HepG2 (cell line): ENCODE measurements at regions of chr12 and their contacts with region 1.

Region 1: DNA sequence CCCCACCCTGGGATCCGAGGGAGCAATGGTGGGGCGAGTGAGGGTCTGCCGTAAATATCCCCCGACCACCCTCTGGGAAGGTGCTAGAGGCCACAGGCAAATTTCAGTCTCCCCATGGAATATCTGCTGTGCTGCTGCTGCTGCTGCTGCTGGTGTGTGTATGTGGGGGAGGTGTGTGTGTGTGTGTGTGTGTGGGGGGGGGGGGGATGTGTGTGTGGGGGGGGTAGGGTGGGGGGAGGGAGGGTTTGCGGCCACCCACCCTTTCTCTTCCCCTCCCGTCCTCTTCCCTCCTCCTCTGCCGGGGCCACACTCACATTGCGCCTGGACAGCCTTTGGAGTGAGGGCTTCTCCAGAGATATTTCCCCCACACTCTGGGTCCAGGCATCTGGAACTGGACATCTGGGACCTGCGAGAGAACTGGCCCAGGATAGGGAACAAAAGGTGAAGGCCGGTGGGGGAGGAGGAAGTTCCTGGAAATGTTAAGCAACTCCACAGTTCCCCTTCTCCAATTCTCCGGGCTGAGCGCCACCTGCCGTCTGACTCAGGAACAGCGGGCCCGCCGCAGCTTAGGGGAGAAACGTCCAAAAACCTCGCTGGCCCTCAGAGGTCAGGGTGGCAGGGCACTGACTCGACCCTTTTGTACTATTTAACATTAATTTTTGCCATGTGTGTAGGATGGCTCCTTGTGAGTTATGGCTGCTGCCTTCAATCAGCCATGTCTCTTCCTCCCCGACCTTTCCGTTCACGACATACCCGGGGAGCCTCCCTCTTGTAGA is at the start of gene C1RL:
- DNase-seq: peak; percentile 89
- ATAC-seq: peak; percentile 66
- H3K4me3 ChIP-seq: peak within 1 kb of the TSS; percentile 72 to 91 (median 74)
- H3K27ac ChIP-seq: peak within 1 kb of the TSS; percentile 99
- H3K4me1 ChIP-seq: peaks cover 25% of the 10 kb centered on the region
- H3K27me3 ChIP-seq: no peaks in the 10 kb centered on the region; a peak in 1 of 5 replicates
- CTCF ChIP-seq: peak; percentile 95
- EP300 ChIP-seq: peak; percentile 45 to 70; a peak in 3 of 4 replicates
- POLR2A ChIP-seq: peak in 1 of 2 experiments; percentile 58; a peak in 2 of 4 replicates
- RAD21 ChIP-seq: peak; percentile 90
- total RNA-seq, gene C1RL: 14.2 and 28.9 TPM in 2 replicates

Region 2: GRCh38 chr12:6927379-6928024 is 181.5 kb before region 1 on chr12 and contains the start of gene ATN1:
- CTCF ChIA-PET with region 1: no interaction called
- POLR2A ChIA-PET with region 1: interaction called, 9 read pairs
- in situ Hi-C with region 1: no loop called
- intact Hi-C with region 1: loop called (anchors 5 kb)
- DNase-seq: no peak
- ATAC-seq: peak; percentile 18
- H3K4me3 ChIP-seq: peak within 1 kb of the TSS; percentile 82 to 93 (median 90)
- H3K27ac ChIP-seq: peak within 1 kb of the TSS; percentile 64
- H3K4me1 ChIP-seq: peaks cover 66% of the 10 kb centered on the region
- H3K27me3 ChIP-seq: no peaks in the 10 kb centered on the region; a peak in 1 of 5 replicates
- CTCF ChIP-seq: no peak
- EP300 ChIP-seq: no peak
- POLR2A ChIP-seq: peak in 1 of 2 experiments; percentile 53; a peak in 1 of 4 replicates
- RAD21 ChIP-seq: no peak
- total RNA-seq, gene ATN1: 2.1 TPM in 2 replicates

Region 3: GRCh38 chr12:7018350-7019042 is 90.5 kb before region 1 on chr12 and contains the start of gene LPCAT3:
- CTCF ChIA-PET with region 1: no interaction called
- POLR2A ChIA-PET with region 1: interaction called, 17 read pairs
- in situ Hi-C with region 1: no loop called
- intact Hi-C with region 1: no loop called
- DNase-seq: peak; percentile 92
- ATAC-seq: peak; percentile 96
- H3K4me3 ChIP-seq: peak within 1 kb of the TSS; percentile 60 to 97 (median 85)
- H3K27ac ChIP-seq: peak within 1 kb of the TSS; percentile 97
- H3K4me1 ChIP-seq: peaks cover 35% of the 10 kb centered on the region
- H3K27me3 ChIP-seq: no peaks in the 10 kb centered on the region; a peak in 1 of 5 replicates
- CTCF ChIP-seq: peak; percentile 87
- EP300 ChIP-seq: peak in 1 of 2 experiments; percentile 34; a peak in 1 of 4 replicates
- POLR2A ChIP-seq: peak; percentile 71 to 78
- RAD21 ChIP-seq: peak; percentile 92
- total RNA-seq, gene LPCAT3: 22.1 and 44.5 TPM in 2 replicates

Region 4: DNA sequence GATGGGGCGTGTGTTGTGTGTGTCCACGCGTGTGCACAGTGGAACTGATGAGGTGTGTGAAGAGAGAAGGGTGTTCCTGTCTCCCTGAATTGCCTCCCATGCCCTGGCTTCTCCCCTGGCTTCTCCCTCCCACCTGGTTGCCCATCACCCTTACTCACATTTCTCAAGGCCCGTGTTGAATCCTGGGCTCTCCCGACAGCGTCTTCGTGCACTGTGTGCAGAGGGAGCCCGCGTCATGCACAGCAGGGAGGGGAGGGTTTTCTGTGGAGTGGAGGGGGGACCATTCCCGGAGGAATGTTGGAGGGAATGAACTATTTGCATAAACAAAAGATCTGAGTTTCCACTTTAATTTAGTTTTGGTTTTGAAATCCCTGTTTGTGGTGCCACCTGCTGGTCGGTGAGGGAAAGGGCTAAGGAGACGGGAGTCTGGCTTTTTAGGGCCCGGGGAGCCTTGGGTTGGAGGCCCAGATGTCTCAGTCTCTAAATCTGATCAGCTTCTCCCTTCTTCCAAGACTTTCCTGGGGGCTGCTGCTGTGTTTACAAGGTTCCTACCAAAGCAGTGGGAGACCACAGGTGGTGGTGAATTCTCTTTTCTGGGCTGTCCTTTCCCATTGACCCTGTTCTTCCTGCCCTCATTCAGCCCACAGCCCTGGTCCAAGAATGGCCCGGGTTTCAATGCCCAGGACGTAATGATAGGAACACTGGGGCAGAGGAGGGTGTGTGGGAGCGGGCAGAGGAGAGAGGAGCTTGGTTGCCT is 16.6 kb before region 1 on chr12 and contains the start of gene C1R:
- CTCF ChIA-PET with region 1: interaction called, 7 read pairs
- POLR2A ChIA-PET with region 1: interaction called, 34 read pairs
- in situ Hi-C with region 1: no loop called
- intact Hi-C with region 1: loop called (anchors 2 kb)
- DNase-seq: peak; percentile 48
- ATAC-seq: peak; percentile 52
- H3K4me3 ChIP-seq: peak within 1 kb of the TSS; percentile 53 to 68 (median 53); a peak in 5 of 6 replicates
- H3K27ac ChIP-seq: no peak within 1 kb of the TSS
- H3K4me1 ChIP-seq: peaks cover 27% of the 10 kb centered on the region
- H3K27me3 ChIP-seq: peaks cover 0 to 2% of the 10 kb centered on the region in 2 experiments; a peak in 1 of 5 replicates
- CTCF ChIP-seq: peak; percentile 86
- EP300 ChIP-seq: no peak
- POLR2A ChIP-seq: no peak; a peak in 1 of 4 replicates
- RAD21 ChIP-seq: peak; percentile 68
- total RNA-seq, gene C1R: 1.7 and 3.5 TPM in 2 replicates

Region 5: GRCh38 chr12:7129872-7130680 is 21.1 kb after region 1 on chr12 and contains the start of gene CLSTN3:
- CTCF ChIA-PET with region 1: no interaction called
- POLR2A ChIA-PET with region 1: interaction called, 88 read pairs
- in situ Hi-C with region 1: no loop called
- intact Hi-C with region 1: no loop called
- DNase-seq: peak; percentile 69
- ATAC-seq: peak; percentile 69
- H3K4me3 ChIP-seq: peak within 1 kb of the TSS; percentile 76 to 92 (median 88)
- H3K27ac ChIP-seq: peak within 1 kb of the TSS; percentile 92
- H3K4me1 ChIP-seq: peaks cover 61% of the 10 kb centered on the region
- H3K27me3 ChIP-seq: no peaks in the 10 kb centered on the region; a peak in 1 of 5 replicates
- CTCF ChIP-seq: no peak
- EP300 ChIP-seq: no peak
- POLR2A ChIP-seq: peak; percentile 33 to 83; a peak in 3 of 4 replicates
- RAD21 ChIP-seq: no peak; the same call in 1 of the 2 replicates
- total RNA-seq, gene CLSTN3: 10.8 and 26.2 TPM in 2 replicates

Region 6: DNA sequence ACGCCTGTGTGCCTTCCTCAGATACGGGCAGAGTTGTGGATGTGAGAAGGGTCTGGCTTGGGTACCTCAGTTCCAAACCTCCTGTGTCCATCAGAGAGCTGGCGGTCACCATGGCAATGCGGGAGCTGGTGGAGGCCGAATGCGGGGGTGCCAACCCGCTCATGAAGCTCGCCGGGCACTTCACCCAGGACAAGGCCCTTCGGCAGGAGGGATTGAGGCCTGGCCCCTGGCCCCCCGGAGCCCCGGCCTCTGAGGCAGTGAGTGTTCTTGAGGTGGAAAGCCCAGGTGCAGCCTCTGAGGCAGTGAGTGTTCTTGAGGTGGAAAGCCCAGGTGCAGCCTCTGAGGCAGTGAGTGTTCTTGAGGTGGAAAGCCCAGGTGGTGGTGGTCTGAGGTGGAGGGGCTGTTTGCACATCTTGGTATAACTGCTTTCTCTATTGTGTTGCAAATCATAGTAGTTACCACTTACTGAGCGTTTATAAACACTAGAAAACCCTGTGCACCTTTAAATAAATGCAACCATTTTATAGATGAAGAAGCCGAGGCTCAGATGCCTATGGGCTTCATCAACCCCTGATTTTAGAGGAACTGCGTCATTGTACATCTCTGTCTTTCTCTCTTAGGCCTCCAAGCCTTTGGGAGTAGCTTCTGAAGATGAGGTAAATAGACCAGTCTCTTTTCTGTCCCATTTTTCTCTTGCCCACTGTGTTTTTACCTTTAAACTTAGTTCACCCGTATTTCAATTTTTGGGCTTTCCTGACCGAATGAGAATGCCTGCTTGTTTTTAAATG is 81.5 kb after region 1 on chr12:
- CTCF ChIA-PET with region 1: no interaction called
- POLR2A ChIA-PET with region 1: no interaction called
- in situ Hi-C with region 1: no loop called
- intact Hi-C with region 1: no loop called
- DNase-seq: peak; percentile 12
- ATAC-seq: peak; percentile 42
- H3K4me3 ChIP-seq: peak overlapping the region; percentile 77 to 95 (median 84)
- H3K27ac ChIP-seq: peak overlapping the region; percentile 50
- H3K4me1 ChIP-seq: peaks cover 43% of the 10 kb centered on the region
- H3K27me3 ChIP-seq: no peaks in the 10 kb centered on the region; a peak in 1 of 5 replicates
- CTCF ChIP-seq: no peak
- EP300 ChIP-seq: no peak
- POLR2A ChIP-seq: no peak
- RAD21 ChIP-seq: no peak

Region 7: GRCh38 chr12:7497661-7498060 is 388.7 kb after region 1 on chr12:
- CTCF ChIA-PET with region 1: no interaction called
- POLR2A ChIA-PET with region 1: no interaction called
- in situ Hi-C with region 1: no loop called
- intact Hi-C with region 1: no loop called
- DNase-seq: no peak
- ATAC-seq: no peak
- H3K4me3 ChIP-seq: no peak overlapping the region
- H3K27ac ChIP-seq: no peak overlapping the region
- H3K4me1 ChIP-seq: peaks cover 7% of the 10 kb centered on the region
- H3K27me3 ChIP-seq: no peaks in the 10 kb centered on the region; a peak in 1 of 5 replicates
- CTCF ChIP-seq: no peak
- EP300 ChIP-seq: no peak
- POLR2A ChIP-seq: no peak
- RAD21 ChIP-seq: no peak

Region 8: GRCh38 chr12:7806863-7807487 is 698.0 kb after region 1 on chr12:
- CTCF ChIA-PET with region 1: no interaction called
- POLR2A ChIA-PET with region 1: no interaction called
- in situ Hi-C with region 1: no loop called
- intact Hi-C with region 1: no loop called
- DNase-seq: peak; percentile 64
- ATAC-seq: peak; percentile 87
- H3K4me3 ChIP-seq: no peak overlapping the region
- H3K27ac ChIP-seq: no peak overlapping the region
- H3K4me1 ChIP-seq: no peaks in the 10 kb centered on the region
- H3K27me3 ChIP-seq: no peaks in the 10 kb centered on the region
- CTCF ChIP-seq: peak; percentile 92
- EP300 ChIP-seq: no peak
- POLR2A ChIP-seq: no peak
- RAD21 ChIP-seq: peak; percentile 82